ENCODE measurements at regions of chr19 and their contacts with region 1.

Region 1: GRCh38 chr19:3146677-3147100 is 10.9 kb downstream of the GNA15 start:
- DNase-seq: no peak
- CTCF ChIP-seq: peak; percentile 83

Region 2: DNA sequence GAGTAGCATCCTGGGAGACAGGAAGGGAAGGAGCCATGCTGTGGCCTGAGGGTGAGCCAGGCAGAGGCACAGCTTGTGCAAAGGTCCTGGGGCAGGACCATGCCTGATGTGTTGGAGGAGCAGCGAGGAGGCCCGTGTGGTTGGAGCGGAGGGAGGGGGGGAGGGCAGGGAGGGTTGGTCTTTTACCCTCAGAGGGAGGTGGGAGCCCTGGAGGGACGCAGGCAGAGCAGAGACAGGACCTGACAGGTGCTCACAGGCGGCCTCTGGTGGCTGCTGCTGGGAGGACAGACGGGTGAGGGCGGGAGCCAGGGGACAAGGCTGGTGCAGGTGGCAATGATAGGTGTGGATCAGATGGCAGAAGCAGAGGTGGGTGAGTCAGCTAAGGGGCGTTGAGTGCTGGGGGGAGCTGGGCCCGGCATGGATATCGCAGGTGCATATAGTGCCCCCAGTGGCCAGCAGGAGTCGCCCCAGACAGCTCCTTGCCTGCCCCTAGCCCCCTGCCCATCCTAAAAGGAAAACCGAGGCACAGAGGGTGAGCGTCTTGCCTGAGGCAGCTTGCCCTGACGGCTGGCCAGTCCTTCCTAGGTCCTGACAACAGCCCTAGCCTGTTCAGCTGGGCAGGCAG is 20.7 kb before region 1 on chr19:
- CTCF ChIA-PET with region 1: interaction called, 29 read pairs
- POLR2A ChIA-PET with region 1: no interaction called
- DNase-seq: peak; percentile 80
- CTCF ChIP-seq: peak; percentile 70